Esophagus muscularis mucosa (tissue), 4 donors: ENCODE measurements at regions of chr2 and their contacts with region 1.

Region 1: GRCh38 chr2:112542123-112542983 is at the start of gene POLR1B:
- DNase-seq: peak; percentile 96
- H3K4me3 ChIP-seq: peak within 1 kb of the TSS; percentile 81 to 99 (median 85)
- H3K27ac ChIP-seq: peak within 1 kb of the TSS; percentile 86 to 90 (median 88)
- H3K4me1 ChIP-seq: peaks cover 13 to 24% (median 19%) of the 10 kb centered on the region in 4 donors
- H3K27me3 ChIP-seq: peaks cover 0 to 7% (median 0%) of the 10 kb centered on the region in 4 donors
- CTCF ChIP-seq: no peak
- EP300 ChIP-seq: no peak
- POLR2A ChIP-seq: no peak
- total RNA-seq, gene POLR1B: 10.0 to 12.4 (median 10.2) TPM

Region 2: DNA sequence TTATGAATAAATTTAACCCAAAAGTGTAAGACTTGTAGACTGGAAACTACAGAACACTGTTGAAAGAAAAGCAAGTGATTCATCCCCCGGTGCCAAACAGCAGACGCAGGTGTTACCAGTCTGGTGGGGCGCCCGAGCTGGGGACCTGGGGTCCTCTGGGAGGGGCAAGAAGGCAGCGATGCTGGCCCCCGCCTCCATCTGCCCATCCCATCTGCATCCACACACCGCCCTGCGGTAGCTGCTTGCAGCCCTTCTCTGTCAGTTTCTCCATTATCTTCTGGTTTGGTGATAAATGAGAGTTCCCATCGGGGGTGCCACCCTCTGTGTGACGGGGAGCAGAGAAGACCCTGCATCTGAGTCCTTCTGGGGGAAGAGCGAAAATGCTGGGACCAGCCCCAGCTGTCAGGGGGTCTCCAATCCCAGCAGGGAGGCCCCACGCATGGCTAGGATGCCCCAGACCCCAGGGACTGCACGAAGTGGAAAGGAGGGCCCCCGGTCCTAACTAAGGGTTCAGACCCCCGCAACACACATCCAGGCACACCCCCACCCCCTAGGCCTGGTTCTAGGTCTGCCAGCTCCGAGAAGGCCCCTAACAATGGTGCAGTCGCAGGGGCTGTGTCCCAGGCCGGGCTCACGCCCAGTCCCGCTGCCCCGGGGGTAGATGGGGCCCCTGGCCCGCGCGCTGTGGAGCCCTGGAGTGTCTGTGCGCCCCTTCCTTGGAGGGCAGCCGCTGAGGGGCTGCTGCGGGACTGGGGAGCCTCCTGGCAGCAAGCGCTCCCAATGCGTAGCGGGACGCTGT is 108.2 kb before region 1 on chr2:
- intact Hi-C with region 1: no loop called
- DNase-seq: peak; percentile 39
- H3K4me3 ChIP-seq: no peak overlapping the region
- H3K27ac ChIP-seq: no peak overlapping the region
- H3K4me1 ChIP-seq: peaks cover 0 to 26% (median 15%) of the 10 kb centered on the region in 4 donors
- H3K27me3 ChIP-seq: peaks cover 0 to 15% (median 0%) of the 10 kb centered on the region in 4 donors
- CTCF ChIP-seq: no peak
- EP300 ChIP-seq: no peak
- POLR2A ChIP-seq: no peak

Region 3: GRCh38 chr2:112481050-112481527 is 61.3 kb before region 1 on chr2:
- intact Hi-C with region 1: loop called (anchors 5 kb)
- DNase-seq: peak; percentile 96
- H3K4me3 ChIP-seq: peak overlapping the region; percentile 80 to 94 (median 86)
- H3K27ac ChIP-seq: peak overlapping the region; percentile 86 to 91 (median 88)
- H3K4me1 ChIP-seq: peaks cover 18 to 30% (median 28%) of the 10 kb centered on the region in 4 donors
- H3K27me3 ChIP-seq: peaks cover 0 to 3% (median 0%) of the 10 kb centered on the region in 4 donors
- CTCF ChIP-seq: peak; percentile 69 to 90 (median 83)
- EP300 ChIP-seq: no peak
- POLR2A ChIP-seq: no peak